B cell (primary cell): ENCODE measurements at regions of chr1 and their contacts with region 1.

Region 1: GRCh38 chr1:165928075-165928731 is 100.8 kb downstream of the UCK2 start:
- DNase-seq: peak; percentile 57
- ATAC-seq: peak; percentile 31
- H3K4me3 ChIP-seq: no peak overlapping the region
- H3K4me3 Mint-ChIP-seq: no peak overlapping the region
- H3K27ac ChIP-seq: no peak overlapping the region
- H3K27ac Mint-ChIP-seq: no peak overlapping the region
- H3K4me1 ChIP-seq: no peaks in the 10 kb centered on the region
- H3K4me1 Mint-ChIP-seq: no peaks in the 10 kb centered on the region
- H3K27me3 ChIP-seq: peaks cover 0 to 7% (median 5%) of the 10 kb centered on the region in 4 experiments
- H3K27me3 Mint-ChIP-seq: peaks cover 50% of the 10 kb centered on the region
- CTCF ChIP-seq: peak; percentile 66

Region 2: GRCh38 chr1:165914136-165914798 is 13.9 kb before region 1 on chr1:
- CTCF ChIA-PET with region 1: interaction called, 26 read pairs
- POLR2A ChIA-PET with region 1: no interaction called
- intact Hi-C with region 1: no loop called
- DNase-seq: peak; percentile 81
- ATAC-seq: peak; percentile 84
- H3K4me3 ChIP-seq: no peak overlapping the region
- H3K4me3 Mint-ChIP-seq: no peak overlapping the region
- H3K27ac ChIP-seq: no peak overlapping the region
- H3K27ac Mint-ChIP-seq: no peak overlapping the region
- H3K4me1 ChIP-seq: no peaks in the 10 kb centered on the region
- H3K4me1 Mint-ChIP-seq: peaks cover 2% of the 10 kb centered on the region
- H3K27me3 ChIP-seq: no peaks in the 10 kb centered on the region
- H3K27me3 Mint-ChIP-seq: no peaks in the 10 kb centered on the region
- CTCF ChIP-seq: peak; percentile 90

Region 3: DNA sequence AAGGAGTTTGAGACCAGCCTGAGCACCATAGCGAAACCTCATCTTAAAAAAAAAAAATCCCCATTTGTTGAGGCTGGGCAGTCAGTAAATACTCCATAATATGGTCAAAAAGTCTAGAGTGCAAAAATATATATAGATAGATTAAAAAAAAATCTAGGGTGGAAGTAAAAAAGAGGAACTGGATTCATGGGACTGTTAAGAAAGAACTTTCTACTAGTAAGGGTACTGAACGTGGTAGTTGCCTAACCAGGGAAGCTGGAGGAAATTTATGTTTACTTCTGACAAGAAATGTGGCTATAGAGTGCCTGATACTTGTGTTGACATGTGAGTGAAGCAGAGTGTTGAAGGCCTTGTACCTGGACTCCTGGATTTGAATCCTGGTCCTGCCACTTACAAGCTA is 504.5 kb after region 1 on chr1:
- CTCF ChIA-PET with region 1: no interaction called
- POLR2A ChIA-PET with region 1: no interaction called
- intact Hi-C with region 1: loop called (anchors 5 kb)
- DNase-seq: no peak
- ATAC-seq: no peak
- H3K4me3 ChIP-seq: no peak overlapping the region
- H3K4me3 Mint-ChIP-seq: no peak overlapping the region
- H3K27ac ChIP-seq: no peak overlapping the region
- H3K27ac Mint-ChIP-seq: no peak overlapping the region
- H3K4me1 ChIP-seq: no peaks in the 10 kb centered on the region
- H3K4me1 Mint-ChIP-seq: no peaks in the 10 kb centered on the region
- H3K27me3 ChIP-seq: peaks cover 0 to 3% (median 0%) of the 10 kb centered on the region in 4 experiments
- H3K27me3 Mint-ChIP-seq: peaks cover 2% of the 10 kb centered on the region
- CTCF ChIP-seq: no peak

Region 4: DNA sequence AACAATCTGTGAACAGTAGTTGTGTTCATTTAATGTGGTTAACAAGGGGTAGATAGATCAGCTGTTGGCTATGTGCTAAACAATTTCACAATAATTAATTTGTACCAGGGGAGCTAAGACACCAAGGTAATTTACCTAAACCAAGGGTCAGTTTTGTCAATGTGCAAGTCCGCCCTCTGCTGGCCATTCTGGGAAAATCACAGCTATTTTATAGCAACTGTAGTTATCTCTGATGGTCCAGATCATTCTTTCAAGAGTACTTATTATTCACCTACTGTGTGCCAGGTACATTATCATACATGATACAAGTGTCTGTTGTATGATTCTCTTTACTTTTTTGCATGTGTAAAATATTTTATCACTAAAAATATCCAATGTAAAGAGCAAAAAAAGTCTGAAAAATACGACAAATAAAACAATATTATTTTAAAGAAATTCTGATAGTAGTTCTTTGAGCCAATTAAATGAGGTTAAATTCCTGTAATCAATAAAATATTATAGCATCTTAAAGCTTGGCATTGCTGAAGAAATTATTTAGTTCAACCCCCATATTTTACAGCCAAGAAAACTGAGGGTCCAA is 550.9 kb after region 1 on chr1:
- CTCF ChIA-PET with region 1: interaction called, 59 read pairs
- POLR2A ChIA-PET with region 1: no interaction called
- intact Hi-C with region 1: no loop called
- DNase-seq: peak; percentile 59
- ATAC-seq: peak; percentile 36
- H3K4me3 ChIP-seq: no peak overlapping the region
- H3K4me3 Mint-ChIP-seq: no peak overlapping the region
- H3K27ac ChIP-seq: no peak overlapping the region
- H3K27ac Mint-ChIP-seq: no peak overlapping the region
- H3K4me1 ChIP-seq: peaks cover 0 to 4% of the 10 kb centered on the region in 2 donors
- H3K4me1 Mint-ChIP-seq: peaks cover 3% of the 10 kb centered on the region
- H3K27me3 ChIP-seq: no peaks in the 10 kb centered on the region
- H3K27me3 Mint-ChIP-seq: no peaks in the 10 kb centered on the region
- CTCF ChIP-seq: peak; percentile 89